CD4-positive, alpha-beta T cell (primary cell): ENCODE measurements at regions of chr18 and their contacts with region 1.

Region 1: DNA sequence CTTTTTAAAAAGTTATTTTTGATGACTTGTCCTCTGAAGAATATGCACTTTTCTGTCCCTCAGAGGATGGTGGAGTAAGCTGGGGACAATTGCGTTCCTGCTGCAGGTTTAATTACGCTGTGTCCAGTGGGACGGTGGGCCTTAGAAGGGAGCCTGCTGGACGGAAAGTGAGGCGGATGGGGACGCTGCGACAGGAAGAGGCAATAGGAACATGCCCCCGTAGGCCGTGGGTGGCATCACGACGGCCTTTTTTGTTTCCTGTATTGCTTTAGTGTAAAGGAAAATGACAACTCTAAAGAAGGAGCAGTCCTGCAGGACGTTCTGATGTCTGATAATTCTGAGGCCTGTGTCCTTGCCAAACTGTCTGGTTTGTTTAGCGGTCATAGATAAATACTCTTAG is 121.6 kb downstream of the NFATC1 start:
- DNase-seq: peak in 5 of 14 experiments; percentile 32 to 68 (median 64)
- ATAC-seq: peak; percentile 22
- H3K4me3 ChIP-seq: peak overlapping the region; percentile 5
- H3K4me3 Mint-ChIP-seq: peak overlapping the region; percentile 79
- H3K27ac ChIP-seq: peak overlapping the region; percentile 67 to 70
- H3K27ac Mint-ChIP-seq: peak overlapping the region; percentile 96
- H3K4me1 ChIP-seq: peaks cover 66% of the 10 kb centered on the region
- H3K4me1 Mint-ChIP-seq: peaks cover 70% of the 10 kb centered on the region
- H3K27me3 ChIP-seq: no peaks in the 10 kb centered on the region
- H3K27me3 Mint-ChIP-seq: no peaks in the 10 kb centered on the region
- CTCF ChIP-seq: no peak

Region 2: GRCh38 chr18:79507076-79507545 is 10.2 kb before region 1 on chr18:
- CTCF ChIA-PET with region 1: no interaction called
- POLR2A ChIA-PET with region 1: interaction called, 43 read pairs
- intact Hi-C with region 1: loop called in 1 of 2 experiments (anchors 1 kb)
- DNase-seq: peak in 8 of 14 experiments; percentile 2 to 54 (median 39)
- ATAC-seq: peak; percentile 67
- H3K4me3 ChIP-seq: peak overlapping the region; percentile 46
- H3K4me3 Mint-ChIP-seq: peak overlapping the region; percentile 79
- H3K27ac ChIP-seq: peak overlapping the region; percentile 66 to 72
- H3K27ac Mint-ChIP-seq: peak overlapping the region; percentile 94
- H3K4me1 ChIP-seq: peaks cover 53% of the 10 kb centered on the region
- H3K4me1 Mint-ChIP-seq: peaks cover 68% of the 10 kb centered on the region
- H3K27me3 ChIP-seq: no peaks in the 10 kb centered on the region
- H3K27me3 Mint-ChIP-seq: no peaks in the 10 kb centered on the region
- CTCF ChIP-seq: no peak

Region 3: GRCh38 chr18:79644006-79644665 is 126.8 kb after region 1 on chr18:
- CTCF ChIA-PET with region 1: no interaction called
- POLR2A ChIA-PET with region 1: no interaction called
- intact Hi-C with region 1: no loop called
- DNase-seq: peak; percentile 44 to 80 (median 57)
- ATAC-seq: peak; percentile 80
- H3K4me3 ChIP-seq: no peak overlapping the region
- H3K4me3 Mint-ChIP-seq: no peak overlapping the region
- H3K27ac ChIP-seq: no peak overlapping the region
- H3K27ac Mint-ChIP-seq: no peak overlapping the region
- H3K4me1 ChIP-seq: peaks cover 18% of the 10 kb centered on the region
- H3K4me1 Mint-ChIP-seq: peaks cover 8% of the 10 kb centered on the region
- H3K27me3 ChIP-seq: peaks cover 0 to 6% of the 10 kb centered on the region in 2 experiments
- H3K27me3 Mint-ChIP-seq: peaks cover 18% of the 10 kb centered on the region
- CTCF ChIP-seq: peak; percentile 99